Activated CD4-positive, alpha-beta T cell treated with anti-CD3 and anti-CD28 coated beads for 36 hours (primary cell): ENCODE measurements at regions of chr7 and their contacts with region 1.

Region 1: GRCh38 chr7:96870156-96870555 is 135.2 kb upstream of the DLX6 start:
- DNase-seq: no peak
- ATAC-seq: no peak
- H3K4me3 Mint-ChIP-seq: no peak overlapping the region
- H3K27ac Mint-ChIP-seq: no peak overlapping the region
- H3K4me1 Mint-ChIP-seq: no peaks in the 10 kb centered on the region
- H3K27me3 Mint-ChIP-seq: peaks cover 7% of the 10 kb centered on the region

Region 2: GRCh38 chr7:95905165-95905564 is 965.0 kb before region 1 on chr7:
- CTCF ChIA-PET with region 1: no interaction called
- POLR2A ChIA-PET with region 1: no interaction called
- intact Hi-C with region 1: no loop called
- DNase-seq: no peak
- ATAC-seq: no peak
- H3K4me3 Mint-ChIP-seq: no peak overlapping the region
- H3K27ac Mint-ChIP-seq: no peak overlapping the region
- H3K4me1 Mint-ChIP-seq: no peaks in the 10 kb centered on the region
- H3K27me3 Mint-ChIP-seq: peaks cover 10% of the 10 kb centered on the region

Region 3: GRCh38 chr7:96075510-96076349 is 794.4 kb before region 1 on chr7:
- CTCF ChIA-PET with region 1: no interaction called
- POLR2A ChIA-PET with region 1: no interaction called
- intact Hi-C with region 1: loop called in 1 of 2 experiments (anchors 5 kb)
- DNase-seq: peak; percentile 71
- ATAC-seq: peak; percentile 81
- H3K4me3 Mint-ChIP-seq: peak overlapping the region; percentile 69
- H3K27ac Mint-ChIP-seq: no peak overlapping the region
- H3K4me1 Mint-ChIP-seq: peaks cover 8% of the 10 kb centered on the region
- H3K27me3 Mint-ChIP-seq: peaks cover 34% of the 10 kb centered on the region